ENCODE measurements at regions of chr13 and their contacts with region 1.

Region 1: GRCh38 chr13:41075034-41075433 is 13.7 kb downstream of the WBP4 start:
- DNase-seq: no peak
- ATAC-seq: peak in 1 of 4 donors; percentile 45
- H3K4me3 ChIP-seq: no peak overlapping the region
- H3K27ac ChIP-seq: no peak overlapping the region
- H3K4me1 ChIP-seq: no peaks in the 10 kb centered on the region
- H3K27me3 ChIP-seq: no peaks in the 10 kb centered on the region
- CTCF ChIP-seq: peak; percentile 30 to 67 (median 58)
- POLR2A ChIP-seq: no peak

Region 2: GRCh38 chr13:41132512-41133152 is 57.6 kb after region 1 on chr13 and contains the start of gene KBTBD6:
- intact Hi-C with region 1: loop called in 1 of 10 experiments (anchors 5 kb)
- DNase-seq: peak; percentile 96 to 98 (median 97)
- ATAC-seq: peak; percentile 96 to 100 (median 99)
- H3K4me3 ChIP-seq: peak within 1 kb of the TSS; percentile 64 to 88 (median 76)
- H3K27ac ChIP-seq: peak within 1 kb of the TSS; percentile 77 to 91 (median 86)
- H3K4me1 ChIP-seq: peaks cover 0 to 48% (median 34%) of the 10 kb centered on the region in 12 donors
- H3K27me3 ChIP-seq: no peaks in the 10 kb centered on the region
- CTCF ChIP-seq: no peak
- POLR2A ChIP-seq: peak in 1 of 2 donors; percentile 72
- total RNA-seq, gene KBTBD6: 6.1 to 11.9 (median 6.7) TPM

Region 3: GRCh38 chr13:41216160-41216559 is 141.1 kb after region 1 on chr13:
- intact Hi-C with region 1: loop called in 3 of 10 experiments (anchors 2 to 5 kb)
- DNase-seq: no peak
- ATAC-seq: no peak
- H3K4me3 ChIP-seq: no peak overlapping the region
- H3K27ac ChIP-seq: no peak overlapping the region
- H3K4me1 ChIP-seq: no peaks in the 10 kb centered on the region
- H3K27me3 ChIP-seq: no peaks in the 10 kb centered on the region
- CTCF ChIP-seq: no peak
- POLR2A ChIP-seq: no peak

Region 4: GRCh38 chr13:41222259-41222852 is 147.3 kb after region 1 on chr13:
- intact Hi-C with region 1: loop called (anchors 1 to 5 kb)
- DNase-seq: peak in 2 of 5 donors; percentile 19 to 36
- ATAC-seq: peak; percentile 64 to 89 (median 84)
- H3K4me3 ChIP-seq: no peak overlapping the region
- H3K27ac ChIP-seq: no peak overlapping the region
- H3K4me1 ChIP-seq: no peaks in the 10 kb centered on the region
- H3K27me3 ChIP-seq: no peaks in the 10 kb centered on the region
- CTCF ChIP-seq: peak; percentile 60 to 81 (median 76)
- POLR2A ChIP-seq: no peak

Measured in heart left ventricle (tissue), 16 donors.